ENCODE measurements at regions of chr7 and their contacts with region 1.

Region 1: GRCh38 chr7:992709-993607 is 10.0 kb downstream of the CYP2W1 start:
- DNase-seq: peak; percentile 98
- H3K4me3 ChIP-seq: no peak overlapping the region
- H3K4me3 Mint-ChIP-seq: peak overlapping the region; percentile 31
- H3K27ac Mint-ChIP-seq: peak overlapping the region; percentile 58
- H3K4me1 ChIP-seq: peaks cover 13% of the 10 kb centered on the region
- H3K4me1 Mint-ChIP-seq: no peaks in the 10 kb centered on the region
- H3K27me3 ChIP-seq: no peaks in the 10 kb centered on the region
- H3K27me3 Mint-ChIP-seq: no peaks in the 10 kb centered on the region
- CTCF ChIP-seq: peak; percentile 99 to 100

Region 2: DNA sequence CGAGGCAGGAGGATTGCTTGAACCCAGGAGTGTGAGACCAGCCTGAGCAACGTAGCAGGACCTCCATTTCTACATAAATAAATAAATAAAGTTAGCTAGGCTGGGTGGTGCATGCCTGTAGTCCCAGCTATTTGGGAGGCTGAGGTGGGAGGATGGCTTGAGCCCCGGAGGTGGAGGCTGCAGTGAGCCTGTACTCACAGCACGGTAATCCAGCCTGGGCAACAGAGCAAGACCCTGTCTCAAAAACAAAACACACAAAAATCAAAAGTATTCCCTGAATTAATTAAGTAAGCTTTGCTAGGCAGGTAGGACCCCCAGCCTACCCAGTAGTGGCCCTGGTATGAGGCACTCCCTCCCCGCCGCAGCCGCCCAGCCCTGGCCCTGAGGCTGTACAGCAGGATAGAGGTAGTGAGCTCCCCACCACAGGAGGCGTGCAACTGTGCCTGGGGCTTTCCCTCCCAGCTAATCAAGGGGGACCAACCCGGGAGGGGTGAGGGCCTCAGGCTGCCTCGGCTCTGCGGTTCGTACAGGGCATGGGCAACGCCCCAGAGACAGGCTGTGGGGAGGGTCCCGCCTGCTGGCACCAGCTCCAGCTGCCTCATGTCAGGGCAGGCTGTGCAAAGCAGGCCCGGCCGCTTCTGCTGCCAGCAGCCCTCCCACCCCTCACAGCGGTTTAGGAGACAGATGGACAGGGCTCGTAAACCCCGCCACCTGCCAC is 11.0 kb before region 1 on chr7:
- CTCF ChIA-PET with region 1: interaction called, 33 read pairs
- POLR2A ChIA-PET with region 1: interaction called, 3 read pairs
- intact Hi-C with region 1: no loop called
- DNase-seq: no peak
- H3K4me3 ChIP-seq: no peak overlapping the region
- H3K4me3 Mint-ChIP-seq: no peak overlapping the region
- H3K27ac Mint-ChIP-seq: peak overlapping the region; percentile 29
- H3K4me1 ChIP-seq: peaks cover 56% of the 10 kb centered on the region
- H3K4me1 Mint-ChIP-seq: peaks cover 11% of the 10 kb centered on the region
- H3K27me3 ChIP-seq: no peaks in the 10 kb centered on the region
- H3K27me3 Mint-ChIP-seq: no peaks in the 10 kb centered on the region
- CTCF ChIP-seq: no peak

Region 3: GRCh38 chr7:1015196-1016121 is 22.5 kb after region 1 on chr7:
- CTCF ChIA-PET with region 1: no interaction called
- POLR2A ChIA-PET with region 1: no interaction called
- intact Hi-C with region 1: no loop called
- DNase-seq: no peak
- H3K4me3 ChIP-seq: no peak overlapping the region
- H3K4me3 Mint-ChIP-seq: no peak overlapping the region
- H3K27ac Mint-ChIP-seq: peak overlapping the region; percentile 31
- H3K4me1 ChIP-seq: peaks cover 10% of the 10 kb centered on the region; the same call in 1 of the 2 replicates
- H3K4me1 Mint-ChIP-seq: no peaks in the 10 kb centered on the region
- H3K27me3 ChIP-seq: no peaks in the 10 kb centered on the region
- H3K27me3 Mint-ChIP-seq: no peaks in the 10 kb centered on the region
- CTCF ChIP-seq: no peak

Region 4: DNA sequence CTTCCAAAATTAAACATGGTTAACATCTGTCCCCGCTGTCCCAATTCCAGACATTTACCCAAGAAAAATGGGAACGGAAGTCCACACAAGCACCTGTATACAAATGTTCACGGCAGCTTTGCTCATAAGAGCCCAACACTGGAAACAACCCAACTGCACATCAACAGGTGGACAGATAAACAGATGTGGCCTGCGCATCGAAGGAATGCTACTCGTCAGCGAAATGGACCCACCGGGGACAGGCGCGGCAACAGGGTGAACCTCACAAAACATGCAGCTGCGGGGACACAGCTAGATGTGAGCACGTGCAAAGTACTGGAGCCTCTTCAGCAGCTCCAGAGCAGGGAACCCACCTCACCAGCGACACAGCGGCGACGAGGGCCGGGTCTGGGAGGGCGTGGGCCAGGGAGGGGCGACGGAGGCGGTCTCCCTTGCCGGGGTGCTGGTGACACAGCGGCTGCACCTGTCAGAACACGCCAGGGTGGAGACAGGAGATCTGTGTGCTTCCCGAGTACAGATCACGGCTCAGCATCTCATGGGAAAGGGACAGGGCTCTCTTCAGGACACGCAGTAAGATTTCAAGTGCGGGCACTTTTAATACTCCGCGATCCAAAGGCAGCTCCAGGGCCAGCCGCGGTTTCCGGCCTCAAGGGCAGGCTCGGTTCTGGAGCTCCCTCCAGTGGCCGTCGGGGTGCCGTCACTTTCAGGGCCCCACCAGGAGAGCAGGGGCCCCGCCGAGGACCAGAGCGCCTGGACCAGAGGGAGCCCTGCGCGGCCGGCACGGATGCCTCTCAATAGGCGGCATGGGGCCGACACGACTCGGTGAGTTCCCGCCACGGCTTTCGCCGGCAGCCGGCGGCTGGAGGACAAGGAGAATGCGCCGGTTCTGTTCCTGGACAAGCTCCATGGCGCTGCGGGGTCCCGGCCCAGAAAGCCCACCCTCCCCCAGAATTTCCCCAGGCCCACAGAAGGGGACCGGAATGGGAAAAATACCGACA is 72.6 kb after region 1 on chr7:
- CTCF ChIA-PET with region 1: interaction called, 17 read pairs
- POLR2A ChIA-PET with region 1: no interaction called
- intact Hi-C with region 1: loop called (anchors 1 kb)
- DNase-seq: peak; percentile 59 to 78
- H3K4me3 ChIP-seq: no peak overlapping the region
- H3K4me3 Mint-ChIP-seq: no peak overlapping the region
- H3K27ac Mint-ChIP-seq: no peak overlapping the region
- H3K4me1 ChIP-seq: peaks cover 14% of the 10 kb centered on the region
- H3K4me1 Mint-ChIP-seq: peaks cover 8% of the 10 kb centered on the region
- H3K27me3 ChIP-seq: no peaks in the 10 kb centered on the region
- H3K27me3 Mint-ChIP-seq: no peaks in the 10 kb centered on the region
- CTCF ChIP-seq: peak; percentile 64 to 67

Region 5: GRCh38 chr7:1137510-1138167 is 144.7 kb after region 1 on chr7:
- CTCF ChIA-PET with region 1: interaction called, 20 read pairs
- POLR2A ChIA-PET with region 1: no interaction called
- intact Hi-C with region 1: loop called (anchors 1 kb)
- DNase-seq: peak in 1 of 2 experiments; percentile 26
- H3K4me3 ChIP-seq: peak overlapping the region; percentile 98
- H3K4me3 Mint-ChIP-seq: peak overlapping the region; percentile 72
- H3K27ac Mint-ChIP-seq: peak overlapping the region; percentile 96
- H3K4me1 ChIP-seq: peaks cover 4% of the 10 kb centered on the region; the same call in 1 of the 2 replicates
- H3K4me1 Mint-ChIP-seq: peaks cover 11% of the 10 kb centered on the region
- H3K27me3 ChIP-seq: no peaks in the 10 kb centered on the region
- H3K27me3 Mint-ChIP-seq: no peaks in the 10 kb centered on the region
- CTCF ChIP-seq: no peak

Region 6: DNA sequence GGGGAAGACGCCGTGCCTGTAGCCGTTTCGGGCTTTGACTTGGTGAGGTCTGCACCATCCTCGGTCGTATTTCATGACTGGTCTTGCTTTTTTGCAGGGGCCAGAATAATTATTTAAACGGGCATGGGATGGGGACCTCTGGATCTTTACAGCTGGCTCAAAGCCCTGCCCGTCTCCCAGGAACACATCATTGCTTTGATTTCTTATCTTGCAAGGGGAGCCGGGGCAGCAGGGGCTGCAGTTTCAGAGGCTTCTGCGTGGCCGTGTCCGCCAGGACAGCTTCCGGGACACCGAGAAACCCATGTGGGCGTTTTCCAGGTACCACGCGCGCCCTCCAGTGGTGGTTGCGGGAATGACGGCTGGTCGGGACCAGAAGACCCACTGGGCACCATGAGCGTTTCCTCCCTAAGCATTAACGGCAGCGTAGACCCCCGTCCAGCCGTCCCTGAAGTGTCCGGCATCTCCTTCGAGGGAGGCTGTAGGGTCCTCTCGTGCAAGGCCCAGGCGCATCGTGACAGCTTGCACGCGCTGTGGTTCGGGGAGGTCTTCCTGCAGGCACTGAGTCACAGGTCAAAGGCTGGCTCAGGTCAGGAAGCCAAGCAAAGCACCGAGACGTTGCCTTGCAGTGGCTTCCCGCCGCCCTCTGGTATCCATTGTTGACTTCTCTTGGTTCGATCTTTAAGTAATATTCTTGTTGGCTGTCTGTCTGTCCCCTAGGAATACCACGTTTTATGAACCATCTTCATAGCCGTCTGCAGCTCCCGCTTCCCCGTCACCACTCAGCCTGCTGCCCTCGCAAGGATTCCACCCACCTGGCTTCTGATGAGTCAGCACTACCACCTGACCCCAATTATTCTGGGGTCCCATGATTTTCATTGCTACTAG is 183.3 kb after region 1 on chr7:
- CTCF ChIA-PET with region 1: interaction called, 24 read pairs
- POLR2A ChIA-PET with region 1: interaction called, 3 read pairs
- intact Hi-C with region 1: loop called (anchors 1 kb)
- DNase-seq: peak; percentile 87 to 93
- H3K4me3 ChIP-seq: peak overlapping the region; percentile 40
- H3K4me3 Mint-ChIP-seq: peak overlapping the region; percentile 74
- H3K27ac Mint-ChIP-seq: peak overlapping the region; percentile 64
- H3K4me1 ChIP-seq: peaks cover 11% of the 10 kb centered on the region
- H3K4me1 Mint-ChIP-seq: no peaks in the 10 kb centered on the region
- H3K27me3 ChIP-seq: no peaks in the 10 kb centered on the region
- H3K27me3 Mint-ChIP-seq: no peaks in the 10 kb centered on the region
- CTCF ChIP-seq: peak; percentile 95 to 97

Region 7: DNA sequence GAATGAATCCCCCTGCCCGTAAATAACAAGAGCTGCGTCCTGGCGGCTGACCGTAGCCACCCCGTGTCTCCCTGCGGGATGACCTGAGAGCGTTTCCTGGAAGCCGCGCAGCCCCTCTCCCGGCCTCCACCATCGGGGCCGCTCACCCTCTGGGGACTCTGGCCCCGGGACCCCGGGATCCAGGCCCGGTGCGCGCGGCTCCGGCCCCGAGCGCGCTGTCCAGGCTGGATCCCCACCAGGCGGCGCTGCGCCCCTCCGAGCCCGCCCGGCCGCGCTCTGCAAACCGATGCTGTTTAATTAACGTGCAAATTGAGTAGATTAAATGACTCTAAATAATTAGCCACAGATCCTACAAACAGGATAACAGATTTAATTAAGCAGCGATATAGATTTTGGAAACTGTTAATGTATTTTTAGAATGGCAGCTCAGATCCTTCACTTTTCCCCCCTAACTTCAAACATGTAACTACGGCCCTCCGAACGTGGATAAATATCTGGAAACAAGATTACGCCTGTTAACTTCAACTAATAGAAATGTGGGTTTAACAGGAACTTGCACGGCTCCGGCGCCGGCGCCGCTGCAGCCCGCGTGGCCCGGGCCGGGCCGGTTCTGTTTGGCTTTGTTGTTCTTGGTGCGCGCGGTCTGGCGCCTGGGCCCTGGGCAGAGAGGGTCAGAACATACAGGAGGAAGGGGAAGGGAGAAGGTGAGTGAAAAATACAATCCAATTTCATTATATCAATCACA is 232.7 kb after region 1 on chr7:
- CTCF ChIA-PET with region 1: no interaction called
- POLR2A ChIA-PET with region 1: no interaction called
- intact Hi-C with region 1: no loop called
- DNase-seq: peak in 1 of 2 experiments; percentile 45
- H3K4me3 ChIP-seq: no peak overlapping the region
- H3K4me3 Mint-ChIP-seq: no peak overlapping the region
- H3K27ac Mint-ChIP-seq: no peak overlapping the region
- H3K4me1 ChIP-seq: no peaks in the 10 kb centered on the region
- H3K4me1 Mint-ChIP-seq: no peaks in the 10 kb centered on the region
- H3K27me3 ChIP-seq: no peaks in the 10 kb centered on the region; the same call in 1 of the 2 replicates
- H3K27me3 Mint-ChIP-seq: peaks cover 12% of the 10 kb centered on the region
- CTCF ChIP-seq: peak; percentile 60 to 82